AG04449 (cell line): ENCODE measurements at regions of chr1 and their contacts with region 1.

Region 1: GRCh38 chr1:58652651-58653184 is 47.1 kb downstream of the MYSM1 start:
- DNase-seq: peak; percentile 33
- H3K4me3 ChIP-seq: no peak overlapping the region
- CTCF ChIP-seq: peak; percentile 74

Region 2: DNA sequence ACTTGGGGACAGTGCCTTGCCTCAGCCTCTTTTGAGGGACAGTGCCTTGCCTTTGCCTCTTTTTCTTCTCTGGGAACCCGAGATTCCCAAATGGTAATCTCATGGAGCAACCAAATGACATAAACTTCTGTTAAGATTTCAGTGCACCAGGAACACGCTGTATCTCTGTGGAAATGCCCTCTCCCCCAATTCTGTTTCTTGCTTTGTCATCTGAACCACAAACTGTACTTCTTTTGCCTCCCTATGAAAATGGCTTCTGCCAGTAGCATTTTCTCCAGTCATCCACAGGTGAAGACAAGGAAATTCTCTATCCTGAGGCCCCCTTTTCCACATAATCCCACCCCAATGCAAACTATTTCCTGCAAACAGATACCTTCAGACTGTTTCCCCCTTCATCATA is 172.5 kb before region 1 on chr1:
- CTCF ChIA-PET with region 1: no interaction called
- POLR2A ChIA-PET with region 1: no interaction called
- DNase-seq: no peak
- H3K4me3 ChIP-seq: no peak overlapping the region
- CTCF ChIP-seq: no peak

Region 3: DNA sequence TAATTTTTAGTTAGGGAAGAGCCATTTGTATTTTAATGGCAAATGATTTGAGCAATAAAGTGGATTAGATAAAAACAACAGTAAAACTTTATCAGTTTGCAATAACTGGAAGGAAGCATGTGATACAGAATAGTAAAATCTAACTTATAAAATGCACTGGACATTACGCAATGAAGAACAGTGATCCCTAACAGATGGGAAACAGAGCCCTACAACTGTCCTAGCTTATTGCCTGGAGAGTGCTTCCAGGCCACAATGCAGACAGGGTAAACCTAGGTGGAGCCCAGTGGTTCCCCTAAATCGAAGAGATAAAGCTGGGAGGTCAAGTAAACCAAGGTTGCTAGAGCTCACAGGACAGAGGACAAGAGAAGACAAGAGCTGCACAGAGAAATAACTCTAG is 113.2 kb before region 1 on chr1:
- CTCF ChIA-PET with region 1: interaction called, 65 read pairs
- POLR2A ChIA-PET with region 1: no interaction called
- DNase-seq: no peak
- H3K4me3 ChIP-seq: no peak overlapping the region
- CTCF ChIP-seq: no peak

Region 4: DNA sequence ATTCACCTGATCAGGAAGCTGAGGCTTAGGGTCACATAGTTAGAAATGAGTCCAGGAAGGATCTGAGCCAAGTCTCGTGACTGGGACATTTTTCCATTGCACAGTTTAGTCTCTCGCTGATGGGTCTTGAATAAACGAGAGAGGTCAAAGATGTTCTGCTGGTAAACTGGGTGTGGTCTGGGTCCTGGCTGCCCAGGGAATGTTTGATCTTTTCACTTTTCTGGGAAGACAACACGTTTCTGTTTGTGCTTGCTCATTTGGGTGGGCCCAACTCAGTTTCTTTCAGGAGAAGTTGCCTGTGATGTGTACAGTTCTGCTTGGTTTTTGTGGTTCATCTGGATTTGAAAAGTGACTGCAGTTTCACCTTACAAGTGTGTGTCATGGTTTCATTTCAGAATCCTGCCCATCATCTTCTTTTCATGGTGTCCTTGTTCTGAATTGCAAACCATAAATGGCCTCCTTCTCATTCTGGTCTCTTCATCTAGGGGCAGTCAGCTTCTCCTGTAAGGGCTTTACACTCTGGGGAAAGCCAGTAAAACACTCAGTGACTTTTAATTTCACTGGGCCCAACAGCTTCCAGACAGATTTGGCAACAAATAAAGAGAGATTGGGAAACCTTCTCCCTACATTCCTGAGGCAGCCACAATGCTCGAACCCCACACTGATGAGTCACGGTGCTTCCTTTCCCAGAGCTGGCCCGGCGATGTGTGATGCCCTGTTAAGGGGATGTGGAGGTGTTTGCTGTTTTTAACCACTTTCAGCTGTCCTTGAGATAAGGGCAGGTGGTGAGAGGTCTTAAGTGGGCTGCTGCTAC is 68.4 kb before region 1 on chr1:
- CTCF ChIA-PET with region 1: interaction called, 10 read pairs
- POLR2A ChIA-PET with region 1: no interaction called
- DNase-seq: peak; percentile 86
- H3K4me3 ChIP-seq: no peak overlapping the region
- CTCF ChIP-seq: no peak

Region 5: DNA sequence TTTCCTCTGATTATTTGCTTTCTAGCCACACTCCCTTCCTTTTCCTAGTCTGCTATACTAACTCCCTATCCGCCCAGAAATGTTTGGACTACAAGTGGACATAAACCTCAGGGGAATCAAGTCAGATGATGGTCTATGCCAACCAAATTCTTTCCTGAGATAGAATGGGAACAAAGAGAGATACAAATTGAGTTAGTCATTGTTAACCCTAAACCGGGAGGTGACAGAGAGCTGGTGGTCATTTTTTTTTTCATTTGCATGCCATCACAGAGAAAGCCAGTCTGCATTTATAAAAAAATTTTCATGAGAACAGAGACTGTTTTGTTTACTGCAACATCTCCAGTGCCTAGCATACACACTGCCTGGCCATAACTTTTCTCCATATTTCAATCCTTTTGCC is 12.2 kb after region 1 on chr1:
- CTCF ChIA-PET with region 1: interaction called, 42 read pairs
- POLR2A ChIA-PET with region 1: no interaction called
- DNase-seq: no peak
- H3K4me3 ChIP-seq: no peak overlapping the region
- CTCF ChIP-seq: no peak

Region 6: GRCh38 chr1:58687516-58687915 is 34.8 kb after region 1 on chr1:
- CTCF ChIA-PET with region 1: interaction called, 18 read pairs
- POLR2A ChIA-PET with region 1: no interaction called
- DNase-seq: no peak
- H3K4me3 ChIP-seq: no peak overlapping the region
- CTCF ChIP-seq: no peak